OCI-LY7 (cell line): ENCODE measurements at regions of chr10 and their contacts with region 1.

Region 1: GRCh38 chr10:96271016-96271829 is at the start of gene BLNK:
- DNase-seq: peak; percentile 89
- H3K4me3 ChIP-seq: peak within 1 kb of the TSS; percentile 90
- H3K27ac ChIP-seq: peak within 1 kb of the TSS; percentile 100
- H3K4me1 ChIP-seq: peaks cover 58% of the 10 kb centered on the region
- CTCF ChIP-seq: no peak
- total RNA-seq, gene BLNK: 78.0 and 113 TPM in 2 replicates

Region 2: GRCh38 chr10:96229568-96230030 is 41.6 kb before region 1 on chr10:
- CTCF ChIA-PET with region 1: interaction called, 9 read pairs
- POLR2A ChIA-PET with region 1: interaction called, 35 read pairs
- intact Hi-C with region 1: loop called (anchors 1 kb)
- DNase-seq: peak; percentile 91
- H3K4me3 ChIP-seq: no peak overlapping the region
- H3K27ac ChIP-seq: peak overlapping the region; percentile 60
- H3K4me1 ChIP-seq: peaks cover 26% of the 10 kb centered on the region
- CTCF ChIP-seq: peak; percentile 100

Region 3: DNA sequence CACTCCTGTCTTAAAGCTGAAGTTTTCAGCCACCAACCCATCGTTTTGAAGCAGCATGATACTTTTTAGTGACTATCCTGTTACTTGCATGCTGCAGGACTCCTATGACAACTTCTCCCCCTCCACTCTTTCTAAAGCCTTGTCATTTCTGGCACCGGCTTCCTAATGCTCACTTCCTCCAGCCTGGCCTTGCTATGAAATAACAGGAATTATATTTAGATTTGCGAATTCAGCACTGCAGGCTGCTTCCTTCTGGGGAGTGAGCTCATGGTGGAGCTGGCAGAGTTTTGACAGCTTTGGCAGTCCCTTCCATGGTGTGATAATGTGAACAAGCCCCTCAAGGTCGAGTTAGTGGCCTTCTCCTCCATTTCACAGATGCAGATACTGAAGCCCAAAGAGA is 13.3 kb before region 1 on chr10:
- CTCF ChIA-PET with region 1: interaction called, 4 read pairs
- POLR2A ChIA-PET with region 1: interaction called, 44 read pairs
- intact Hi-C with region 1: no loop called
- DNase-seq: no peak
- H3K4me3 ChIP-seq: peak overlapping the region; percentile 32
- H3K27ac ChIP-seq: peak overlapping the region; percentile 54
- H3K4me1 ChIP-seq: peaks cover 81% of the 10 kb centered on the region
- CTCF ChIP-seq: no peak

Region 4: DNA sequence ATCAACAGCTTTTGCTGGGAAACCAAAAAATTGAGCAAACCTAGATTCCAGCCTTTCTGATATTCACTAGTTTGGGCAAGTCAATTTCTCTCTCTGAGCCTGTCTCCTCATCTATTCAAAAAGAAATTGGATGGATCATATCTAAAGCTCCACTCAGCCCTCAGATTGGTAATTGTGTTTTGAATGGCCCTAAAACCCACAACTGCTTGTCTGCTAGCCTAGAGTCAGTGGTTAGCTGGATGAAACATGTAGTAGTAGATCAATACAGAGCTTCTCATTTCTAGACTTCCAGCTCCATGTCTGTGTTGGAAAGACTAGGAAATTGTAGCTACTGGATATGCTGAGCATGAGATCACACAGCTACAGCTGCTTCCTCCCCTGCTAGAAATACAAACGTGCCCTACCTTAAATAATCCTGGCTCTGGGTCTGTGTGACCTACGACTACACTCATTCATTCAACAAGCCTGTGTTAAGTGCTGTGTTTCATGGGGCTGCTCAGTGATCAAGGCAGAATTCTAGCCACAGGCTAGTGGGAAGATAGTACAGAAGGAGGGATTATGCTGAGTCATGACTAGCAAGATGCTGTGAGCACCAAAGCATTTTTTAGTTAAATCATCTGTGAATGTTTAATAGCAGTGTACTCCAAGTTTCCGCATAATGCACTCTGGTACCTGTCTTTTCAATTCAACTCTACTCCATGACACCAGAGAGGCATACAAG is 48.7 kb after region 1 on chr10:
- CTCF ChIA-PET with region 1: interaction called, 4 read pairs
- POLR2A ChIA-PET with region 1: interaction called, 10 read pairs
- intact Hi-C with region 1: no loop called
- DNase-seq: no peak
- H3K4me3 ChIP-seq: no peak overlapping the region
- H3K27ac ChIP-seq: no peak overlapping the region
- H3K4me1 ChIP-seq: peaks cover 10% of the 10 kb centered on the region
- CTCF ChIP-seq: no peak